ENCODE measurements at regions of chr1 and their contacts with region 1.

Region 1: GRCh38 chr1:89598450-89599331 is 34.2 kb upstream of the LRRC8C start:
- DNase-seq: no peak
- H3K4me3 Mint-ChIP-seq: no peak overlapping the region
- H3K27ac Mint-ChIP-seq: peak overlapping the region; percentile 66
- H3K4me1 Mint-ChIP-seq: peaks cover 75% of the 10 kb centered on the region
- H3K27me3 Mint-ChIP-seq: no peaks in the 10 kb centered on the region

Region 2: GRCh38 chr1:89483010-89483756 is 115.5 kb before region 1 on chr1:
- intact Hi-C with region 1: loop called (anchors 1 kb)
- DNase-seq: peak; percentile 58
- H3K4me3 Mint-ChIP-seq: no peak overlapping the region
- H3K27ac Mint-ChIP-seq: no peak overlapping the region
- H3K4me1 Mint-ChIP-seq: peaks cover 25% of the 10 kb centered on the region
- H3K27me3 Mint-ChIP-seq: no peaks in the 10 kb centered on the region

Region 3: DNA sequence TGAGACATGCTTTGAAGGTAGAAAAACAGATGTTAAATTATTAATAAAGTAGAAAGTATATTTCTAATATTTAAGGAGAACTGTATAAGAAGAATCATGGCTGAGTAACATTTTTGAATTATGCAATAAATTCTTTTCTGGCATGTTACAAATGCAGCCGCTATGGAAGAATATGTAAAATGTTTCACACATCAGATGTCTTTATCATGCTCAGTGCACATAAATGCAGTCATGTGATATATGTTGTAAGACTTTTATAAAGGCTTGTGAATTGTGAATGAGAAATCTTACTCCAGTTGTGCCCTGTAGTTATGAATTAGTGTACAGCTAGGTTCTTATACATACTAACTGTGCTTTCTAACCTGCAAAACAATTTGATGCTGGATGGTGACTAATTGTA is 20.5 kb before region 1 on chr1:
- intact Hi-C with region 1: no loop called
- DNase-seq: no peak
- H3K4me3 Mint-ChIP-seq: no peak overlapping the region
- H3K27ac Mint-ChIP-seq: no peak overlapping the region
- H3K4me1 Mint-ChIP-seq: peaks cover 29% of the 10 kb centered on the region
- H3K27me3 Mint-ChIP-seq: no peaks in the 10 kb centered on the region

Region 4: DNA sequence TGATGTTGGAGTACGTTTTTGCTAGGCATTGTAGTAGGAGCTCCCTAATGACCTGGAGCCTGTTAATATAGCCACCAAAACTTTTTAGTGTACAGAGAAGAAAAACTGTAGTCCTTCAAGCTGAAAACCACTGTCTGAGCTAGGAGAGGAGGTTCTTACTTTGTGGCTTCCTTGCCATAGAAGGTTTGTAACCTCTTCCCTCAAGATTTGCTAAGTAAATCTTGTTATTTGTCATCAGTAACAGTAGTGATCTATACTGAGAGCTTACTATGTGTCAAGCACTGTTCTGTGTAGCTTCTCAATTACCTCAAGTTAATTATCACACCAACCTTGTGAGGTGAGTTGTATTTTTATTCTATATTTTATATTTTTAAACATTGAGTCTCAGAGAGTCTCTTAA is 13.0 kb after region 1 on chr1:
- intact Hi-C with region 1: loop called (anchors 1 kb)
- DNase-seq: no peak
- H3K4me3 Mint-ChIP-seq: peak overlapping the region; percentile 81
- H3K27ac Mint-ChIP-seq: peak overlapping the region; percentile 99
- H3K4me1 Mint-ChIP-seq: peaks cover 80% of the 10 kb centered on the region
- H3K27me3 Mint-ChIP-seq: no peaks in the 10 kb centered on the region